Esophagus muscularis mucosa (tissue), 4 donors: ENCODE measurements at regions of chr11 and their contacts with region 1.

Region 1: GRCh38 chr11:81644239-81644840 is 1089.3 kb downstream of the FAM181B start:
- DNase-seq: no peak
- H3K4me3 ChIP-seq: no peak overlapping the region
- H3K27ac ChIP-seq: no peak overlapping the region
- H3K4me1 ChIP-seq: no peaks in the 10 kb centered on the region
- H3K27me3 ChIP-seq: no peaks in the 10 kb centered on the region
- CTCF ChIP-seq: peak in 2 of 3 experiments; percentile 35 to 52
- EP300 ChIP-seq: no peak
- POLR2A ChIP-seq: no peak

Region 2: DNA sequence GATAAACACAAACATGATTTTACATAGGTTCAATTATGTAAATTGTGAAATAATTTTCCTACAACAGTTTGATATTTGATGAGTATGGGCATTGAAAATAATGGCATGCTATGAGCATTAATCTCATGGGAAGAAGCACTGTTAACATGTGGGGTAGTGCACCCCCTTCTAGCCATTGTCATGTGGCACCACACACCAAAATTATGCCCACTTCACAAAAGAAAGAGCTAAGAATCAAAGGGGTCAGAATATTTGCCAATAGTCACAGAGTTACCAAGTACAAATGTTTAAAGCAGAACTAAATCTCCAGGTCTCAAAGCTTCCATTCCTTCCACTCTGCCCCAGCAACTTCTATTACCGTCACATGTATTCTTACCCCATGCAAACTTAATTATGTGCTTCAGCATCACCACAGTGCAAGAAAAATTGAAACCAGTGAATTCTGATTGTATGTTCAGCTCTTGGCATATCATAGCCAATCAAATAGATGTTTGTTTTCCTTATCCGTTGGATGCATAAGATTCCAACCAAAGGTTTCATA is 184.5 kb before region 1 on chr11:
- intact Hi-C with region 1: no loop called
- DNase-seq: no peak
- H3K4me3 ChIP-seq: no peak overlapping the region
- H3K27ac ChIP-seq: no peak overlapping the region
- H3K4me1 ChIP-seq: no peaks in the 10 kb centered on the region
- H3K27me3 ChIP-seq: no peaks in the 10 kb centered on the region
- CTCF ChIP-seq: no peak
- EP300 ChIP-seq: no peak
- POLR2A ChIP-seq: no peak

Region 3: DNA sequence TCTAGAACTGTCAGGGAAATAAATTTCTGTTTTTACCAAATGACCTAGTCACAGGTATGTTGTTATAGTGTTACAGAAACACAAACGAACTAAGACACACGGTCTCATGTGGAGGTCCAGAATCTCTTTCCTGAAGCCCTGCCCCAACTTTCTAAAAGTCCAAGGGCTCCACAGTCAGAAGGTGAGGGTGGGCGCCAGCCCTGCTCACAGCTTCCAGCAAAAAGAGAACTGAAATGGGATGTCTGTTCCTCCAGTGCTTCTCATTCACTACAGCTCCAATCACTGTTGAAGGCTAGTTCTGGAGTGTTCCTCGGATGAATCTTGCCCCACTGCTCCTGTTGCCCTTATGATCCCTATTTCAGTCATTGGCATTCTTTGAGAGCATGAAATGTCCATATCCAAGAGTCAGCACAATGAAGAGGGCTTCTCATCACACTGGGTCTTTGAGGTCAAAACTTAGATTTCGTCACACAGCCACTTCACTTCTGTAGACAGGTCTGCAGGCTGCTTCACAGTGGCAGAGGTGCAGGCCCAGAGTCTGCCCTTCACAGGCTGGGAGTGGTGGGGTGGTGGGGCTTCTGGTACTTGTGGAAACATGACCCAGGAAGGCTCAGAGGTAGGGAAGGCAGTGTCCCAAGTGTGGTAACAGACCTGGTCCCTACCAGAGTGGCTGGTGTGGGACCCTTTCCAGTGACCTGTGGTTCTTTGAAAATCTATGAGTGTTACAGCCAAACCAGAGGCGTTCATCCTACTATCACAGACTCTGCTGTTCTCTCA is 1054.4 kb after region 1 on chr11:
- intact Hi-C with region 1: loop called (anchors 10 kb)
- DNase-seq: peak; percentile 78
- H3K4me3 ChIP-seq: no peak overlapping the region
- H3K27ac ChIP-seq: no peak overlapping the region
- H3K4me1 ChIP-seq: no peaks in the 10 kb centered on the region
- H3K27me3 ChIP-seq: peaks cover 0 to 9% (median 0%) of the 10 kb centered on the region in 4 donors
- CTCF ChIP-seq: no peak
- EP300 ChIP-seq: no peak
- POLR2A ChIP-seq: no peak